ENCODE measurements at regions of chr16 and their contacts with region 1.

Region 1: DNA sequence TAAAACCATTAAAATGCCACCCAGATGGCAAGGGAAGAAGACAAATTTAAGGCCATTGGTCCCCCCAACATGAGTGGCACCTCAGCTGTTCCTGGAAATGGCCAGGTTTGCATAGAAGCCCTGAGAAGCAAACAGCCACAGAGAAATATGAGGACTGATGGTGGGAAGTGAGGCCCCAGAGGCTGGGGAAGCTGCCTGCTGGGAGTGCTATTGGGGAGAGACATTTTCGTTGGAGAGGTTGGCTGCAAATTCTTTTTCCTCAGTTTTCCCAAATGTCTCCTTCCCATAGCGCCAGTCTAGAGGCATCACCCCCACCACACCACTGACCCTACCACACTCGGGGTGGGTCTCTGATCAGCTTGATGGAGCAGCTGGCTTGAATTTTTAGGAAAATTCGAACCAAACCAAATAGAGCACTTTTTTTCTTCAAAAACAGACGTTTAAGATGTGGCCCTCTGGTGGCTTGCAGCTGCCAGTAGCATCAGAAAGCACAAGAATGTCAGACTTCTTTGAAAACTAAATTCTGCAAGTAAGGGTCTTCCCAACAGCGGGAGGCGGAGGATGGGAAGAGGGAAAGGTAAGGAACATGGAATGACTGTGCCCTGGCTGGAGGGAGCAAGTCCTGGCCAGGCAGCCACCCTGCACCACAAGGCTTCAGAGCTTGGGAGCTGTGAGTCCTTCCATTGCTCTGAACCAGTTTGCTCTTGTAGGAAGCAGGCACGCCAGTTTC is 13.2 kb upstream of the SLC12A3 start:
- DNase-seq: no peak
- ATAC-seq: no peak
- H3K4me3 ChIP-seq: no peak overlapping the region
- H3K27ac ChIP-seq: no peak overlapping the region
- H3K4me1 ChIP-seq: peaks cover 36% of the 10 kb centered on the region
- H3K27me3 ChIP-seq: no peaks in the 10 kb centered on the region
- CTCF ChIP-seq: peak; percentile 49

Region 2: GRCh38 chr16:56795011-56795410 is 56.8 kb before region 1 on chr16:
- CTCF ChIA-PET with region 1: interaction called, 13 read pairs
- POLR2A ChIA-PET with region 1: no interaction called
- intact Hi-C with region 1: loop called (anchors 1 kb)
- DNase-seq: peak; percentile 51
- ATAC-seq: peak; percentile 72
- H3K4me3 ChIP-seq: no peak overlapping the region
- H3K27ac ChIP-seq: no peak overlapping the region
- H3K4me1 ChIP-seq: peaks cover 3% of the 10 kb centered on the region; the same call in 1 of the 2 replicates
- H3K27me3 ChIP-seq: no peaks in the 10 kb centered on the region
- CTCF ChIP-seq: no peak

Measured in PC-3 (cell line).